ENCODE measurements at regions of chr10 and their contacts with region 1.

Region 1: GRCh38 chr10:62760401-62760800 is 44.1 kb upstream of the ADO start:
- DNase-seq: no peak
- ATAC-seq: no peak
- H3K4me3 ChIP-seq: no peak overlapping the region
- H3K27ac ChIP-seq: peak overlapping the region; percentile 59
- H3K4me1 ChIP-seq: no peaks in the 10 kb centered on the region
- H3K27me3 ChIP-seq: no peaks in the 10 kb centered on the region
- CTCF ChIP-seq: no peak

Region 2: DNA sequence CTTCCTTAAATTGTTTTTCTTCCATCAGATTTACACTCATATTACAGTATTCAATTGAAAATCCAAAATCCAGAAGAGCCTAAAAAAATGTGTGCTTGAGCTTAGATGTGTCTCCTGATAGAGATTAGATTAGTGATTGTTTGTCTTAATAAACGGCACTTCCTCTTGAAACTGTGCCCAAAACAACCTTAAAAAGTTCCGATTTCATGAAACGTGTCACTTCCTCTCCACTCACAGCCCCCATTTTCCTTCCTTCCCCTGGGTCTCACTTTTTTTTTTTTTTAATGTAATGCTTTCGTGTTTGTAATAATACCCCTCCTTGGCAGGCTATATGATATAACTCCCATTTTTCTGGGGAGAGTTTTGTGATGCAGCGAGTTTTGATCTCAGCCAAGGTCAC is 70.7 kb before region 1 on chr10:
- intact Hi-C with region 1: loop called in 1 of 2 experiments (anchors 5 kb)
- DNase-seq: no peak
- ATAC-seq: no peak
- H3K4me3 ChIP-seq: no peak overlapping the region
- H3K27ac ChIP-seq: no peak overlapping the region
- H3K4me1 ChIP-seq: no peaks in the 10 kb centered on the region
- H3K27me3 ChIP-seq: no peaks in the 10 kb centered on the region
- CTCF ChIP-seq: no peak

Region 3: GRCh38 chr10:62804356-62805230 is 44.2 kb after region 1 on chr10 and contains the start of gene ADO:
- intact Hi-C with region 1: loop called in 1 of 2 experiments (anchors 5 kb)
- DNase-seq: peak; percentile 87 to 95
- ATAC-seq: peak; percentile 95 to 97 (median 96)
- H3K4me3 ChIP-seq: peak within 1 kb of the TSS; percentile 91
- H3K27ac ChIP-seq: peak within 1 kb of the TSS; percentile 97
- H3K4me1 ChIP-seq: peaks cover 26% of the 10 kb centered on the region
- H3K27me3 ChIP-seq: peaks cover 0 to 8% (median 0%) of the 10 kb centered on the region in 3 donors
- CTCF ChIP-seq: no peak
- total RNA-seq, gene ADO: 17.6 to 24.8 (median 20.1) TPM